ENCODE measurements at regions of chrX and their contacts with region 1.

Region 1: DNA sequence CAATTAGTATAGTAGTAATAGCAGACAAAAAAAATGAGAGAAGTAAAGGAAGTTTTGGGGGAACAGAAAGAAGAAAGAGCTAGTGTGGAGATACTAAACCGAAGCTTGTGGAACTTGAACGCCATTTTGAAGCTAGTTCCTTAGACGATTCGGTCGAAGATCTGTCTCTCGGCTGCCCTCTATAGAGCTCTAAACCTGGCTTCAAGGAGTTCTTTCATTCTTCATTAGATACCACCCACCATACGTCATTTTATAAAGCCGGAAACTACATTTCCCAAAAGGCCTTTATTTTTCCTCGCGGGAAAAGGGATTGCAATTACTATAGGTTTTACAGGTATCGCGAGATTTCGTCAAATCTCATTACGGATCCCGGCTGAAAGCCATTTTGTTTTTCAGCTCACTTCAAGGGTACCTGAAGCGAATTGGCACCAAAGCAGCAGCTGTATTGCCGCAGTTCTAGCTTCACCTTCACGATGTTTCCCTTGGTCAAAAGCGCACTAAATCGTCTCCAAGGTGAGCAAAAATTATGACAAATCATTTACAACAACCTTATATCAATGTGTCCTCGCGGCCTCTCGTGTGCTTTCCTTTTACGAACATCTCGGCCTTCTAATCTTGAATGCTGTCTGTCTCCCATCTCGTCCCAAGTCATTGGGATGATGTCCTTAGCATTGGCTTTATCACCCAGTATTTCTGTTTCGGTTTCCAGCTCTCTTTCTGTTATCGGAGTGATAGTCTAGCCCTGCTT is at the start of gene COX7B:
- DNase-seq: peak; percentile 65
- H3K4me3 Mint-ChIP-seq: peak within 1 kb of the TSS; percentile 95
- H3K27ac Mint-ChIP-seq: peak within 1 kb of the TSS; percentile 94
- H3K4me1 Mint-ChIP-seq: peaks cover 14% of the 10 kb centered on the region
- H3K27me3 Mint-ChIP-seq: peaks cover 2% of the 10 kb centered on the region
- total RNA-seq, gene COX7B: 272 and 286 TPM in 2 replicates

Region 2: GRCh38 chrX:77446029-77446585 is 453.1 kb before region 1 on chrX:
- intact Hi-C with region 1: loop called (anchors 5 kb)
- DNase-seq: no peak
- H3K4me3 Mint-ChIP-seq: peak overlapping the region; percentile 65
- H3K27ac Mint-ChIP-seq: no peak overlapping the region
- H3K4me1 Mint-ChIP-seq: no peaks in the 10 kb centered on the region
- H3K27me3 Mint-ChIP-seq: peaks cover 11% of the 10 kb centered on the region

Region 3: DNA sequence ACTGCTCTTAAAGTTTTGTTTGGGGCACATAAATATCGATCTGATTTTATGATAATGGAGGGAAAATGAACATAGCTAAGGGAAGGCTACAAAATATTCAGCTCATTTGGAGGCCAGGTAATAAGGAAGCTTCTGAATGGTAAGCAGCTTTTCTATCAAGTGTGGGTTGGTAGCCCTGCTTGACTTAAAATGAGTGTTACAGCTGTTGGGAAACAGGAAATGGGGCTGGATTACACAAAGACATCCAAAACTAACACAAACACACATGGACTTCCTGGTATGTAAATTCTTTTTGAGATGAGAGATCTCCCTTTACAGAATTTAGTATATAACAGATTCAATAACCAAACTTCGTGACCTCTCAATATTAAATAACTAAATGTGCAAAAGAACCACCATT is 394.0 kb before region 1 on chrX:
- intact Hi-C with region 1: no loop called
- DNase-seq: no peak
- H3K4me3 Mint-ChIP-seq: no peak overlapping the region
- H3K27ac Mint-ChIP-seq: no peak overlapping the region
- H3K4me1 Mint-ChIP-seq: peaks cover 8% of the 10 kb centered on the region
- H3K27me3 Mint-ChIP-seq: no peaks in the 10 kb centered on the region

Region 4: DNA sequence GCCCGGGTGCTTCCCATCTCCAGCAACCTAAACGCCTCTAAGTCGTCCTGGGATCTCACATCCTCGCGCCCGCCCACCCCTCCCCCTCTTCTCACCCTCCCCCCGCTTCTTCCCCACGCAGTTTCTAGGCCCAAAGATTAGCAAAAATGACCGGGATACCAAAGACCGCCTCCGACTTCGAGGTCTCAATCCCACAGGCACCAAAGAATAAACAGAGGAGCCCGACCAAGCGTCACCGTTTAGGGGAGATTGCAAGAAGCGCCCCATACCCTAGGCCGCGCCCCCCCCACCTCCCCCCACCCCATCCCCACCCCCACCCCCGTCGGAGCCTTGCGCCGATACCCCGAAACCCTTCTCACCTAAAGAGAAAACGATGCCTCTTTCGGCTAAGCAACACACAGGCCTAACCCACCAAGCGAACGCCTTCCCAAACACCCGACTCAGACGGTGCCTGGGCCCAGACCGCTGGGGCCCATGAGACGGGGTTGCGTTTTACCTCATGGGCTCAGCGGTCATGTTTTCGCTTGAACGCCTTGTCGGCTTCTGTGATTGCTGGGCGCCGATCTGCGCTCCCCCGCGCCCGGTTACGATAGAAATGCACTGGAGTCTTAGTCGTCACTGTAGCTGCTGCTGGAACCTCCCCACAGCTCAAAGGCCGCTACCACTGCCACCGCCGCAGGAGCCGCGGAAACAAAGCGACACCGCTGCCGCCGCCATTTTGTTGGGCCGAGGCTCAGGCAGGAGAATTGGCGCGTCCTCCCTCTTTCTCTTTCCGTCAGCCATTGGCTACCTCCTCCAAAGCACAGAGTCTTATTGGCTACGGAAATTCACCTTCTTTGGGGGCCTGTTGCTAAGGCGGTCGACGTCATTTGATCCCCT is 113.5 kb before region 1 on chrX and contains the start of gene ATRX:
- intact Hi-C with region 1: loop called (anchors 1 kb)
- DNase-seq: peak; percentile 72
- H3K4me3 Mint-ChIP-seq: peak within 1 kb of the TSS; percentile 100
- H3K27ac Mint-ChIP-seq: peak within 1 kb of the TSS; percentile 100
- H3K4me1 Mint-ChIP-seq: peaks cover 33% of the 10 kb centered on the region
- H3K27me3 Mint-ChIP-seq: no peaks in the 10 kb centered on the region
- total RNA-seq, gene ATRX: 63.9 and 72.7 TPM in 2 replicates

Region 5: DNA sequence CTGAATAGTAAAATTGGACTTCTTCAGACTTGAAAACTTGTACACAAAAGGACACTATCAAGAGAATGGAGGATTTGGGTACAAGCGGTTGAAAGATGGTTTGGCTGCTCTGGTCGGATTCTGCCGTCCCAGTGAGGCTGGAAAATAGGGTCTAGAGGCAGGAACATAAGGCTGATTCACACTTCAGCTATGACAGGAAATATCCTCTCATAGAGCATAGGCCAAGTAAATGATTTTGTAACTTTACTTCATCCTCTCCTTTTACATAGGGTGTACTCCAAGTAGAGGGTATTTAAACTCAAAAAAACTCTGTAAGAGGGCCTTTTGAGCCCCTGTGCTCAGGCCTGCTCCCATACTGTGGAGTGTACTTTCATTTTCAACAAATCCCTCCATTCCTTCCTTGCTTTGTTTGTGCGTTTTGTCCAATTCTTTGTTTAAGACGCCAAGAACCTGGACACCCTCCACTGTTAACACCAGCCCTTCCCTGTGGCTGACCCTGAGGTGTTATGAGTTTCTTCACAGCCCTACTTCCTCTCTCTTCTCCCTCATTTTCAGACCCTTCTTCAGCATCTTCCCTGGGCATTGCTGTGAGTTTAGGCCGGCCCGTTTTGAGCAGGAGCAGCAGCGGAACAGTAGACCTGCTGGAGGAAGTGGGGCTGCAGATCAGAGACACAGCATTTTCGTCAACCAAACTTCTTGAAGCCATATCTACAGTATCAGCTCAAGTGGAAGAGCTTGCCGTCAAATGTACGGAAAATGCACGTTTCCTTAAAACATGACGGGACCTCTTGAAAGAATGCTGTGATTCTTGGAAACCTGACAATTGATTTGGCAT is 63.0 kb after region 1 on chrX:
- intact Hi-C with region 1: loop called (anchors 1 kb)
- DNase-seq: peak; percentile 5
- H3K4me3 Mint-ChIP-seq: peak overlapping the region; percentile 80
- H3K27ac Mint-ChIP-seq: peak overlapping the region; percentile 99
- H3K4me1 Mint-ChIP-seq: peaks cover 54% of the 10 kb centered on the region
- H3K27me3 Mint-ChIP-seq: no peaks in the 10 kb centered on the region

Measured in activated T-helper 1 cell treated with anti-CD3 and anti-CD28 coated beads, Interleukin-12 subunit alpha, Interleukin-12 subunit beta, Interleukin-2, Interleukin-4 antibody, amounts not matched to agents 30 ng/mL and 10 ng/mL and 1 ng/mL, durations not matched to agents 14 hours and 24 hours and 36 hours (primary cell).